ENCODE measurements at regions of chr13 and their contacts with region 1.

Region 1: GRCh38 chr13:98576963-98577822 is at the start of gene STK24:
- DNase-seq: peak; percentile 69 to 81
- ATAC-seq: peak; percentile 71 to 86 (median 78)
- H3K4me3 ChIP-seq: peak within 1 kb of the TSS; percentile 73 to 99 (median 94)
- H3K27ac ChIP-seq: peak within 1 kb of the TSS; percentile 96 to 99 (median 98)
- H3K4me1 ChIP-seq: peaks cover 7 to 74% (median 39%) of the 10 kb centered on the region in 9 donors
- H3K27me3 ChIP-seq: no peaks in the 10 kb centered on the region
- CTCF ChIP-seq: no peak
- total RNA-seq, gene STK24: 52.0 to 72.9 (median 63.2) TPM

Region 2: DNA sequence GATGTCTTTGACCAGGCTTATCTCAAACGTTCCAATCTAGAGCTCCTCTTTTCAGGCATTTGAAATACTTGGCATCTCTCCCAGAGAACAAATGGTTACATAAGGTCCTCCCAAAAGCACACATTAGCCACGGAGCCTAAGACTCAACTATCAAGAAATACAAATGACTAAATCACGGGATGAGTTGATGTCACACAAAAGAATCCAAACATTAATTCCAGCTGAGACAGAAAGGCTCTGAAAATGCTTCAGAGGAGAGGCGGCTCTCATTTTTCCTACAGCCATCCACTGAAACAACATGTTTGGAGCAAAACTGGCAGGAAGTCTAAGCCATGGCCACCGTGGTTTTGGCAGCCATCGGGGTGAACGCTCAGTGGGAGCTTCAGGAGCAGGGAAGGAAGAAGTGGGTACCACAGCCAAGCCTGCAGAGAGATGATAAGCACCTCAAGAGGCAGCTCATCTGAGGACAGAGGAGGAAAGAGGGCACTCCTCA is 122.8 kb before region 1 on chr13:
- intact Hi-C with region 1: loop called in 7 of 10 experiments (anchors 5 to 10 kb)
- DNase-seq: no peak
- ATAC-seq: peak in 7 of 8 donors; percentile 45 to 83 (median 68)
- H3K4me3 ChIP-seq: no peak overlapping the region
- H3K27ac ChIP-seq: peak overlapping the region in 9 of 10 donors; percentile 7 to 86 (median 66)
- H3K4me1 ChIP-seq: peaks cover 11 to 71% (median 50%) of the 10 kb centered on the region in 9 donors
- H3K27me3 ChIP-seq: no peaks in the 10 kb centered on the region
- CTCF ChIP-seq: no peak

Region 3: GRCh38 chr13:98476538-98476966 is 100.6 kb before region 1 on chr13:
- intact Hi-C with region 1: loop called in 5 of 10 experiments (anchors 5 to 10 kb)
- DNase-seq: no peak
- ATAC-seq: peak; percentile 11 to 65 (median 42)
- H3K4me3 ChIP-seq: peak overlapping the region in 1 of 10 donors; percentile 3
- H3K27ac ChIP-seq: peak overlapping the region in 7 of 10 donors; percentile 7 to 82 (median 37)
- H3K4me1 ChIP-seq: peaks cover 8 to 93% (median 63%) of the 10 kb centered on the region in 9 donors
- H3K27me3 ChIP-seq: no peaks in the 10 kb centered on the region
- CTCF ChIP-seq: no peak

Region 4: DNA sequence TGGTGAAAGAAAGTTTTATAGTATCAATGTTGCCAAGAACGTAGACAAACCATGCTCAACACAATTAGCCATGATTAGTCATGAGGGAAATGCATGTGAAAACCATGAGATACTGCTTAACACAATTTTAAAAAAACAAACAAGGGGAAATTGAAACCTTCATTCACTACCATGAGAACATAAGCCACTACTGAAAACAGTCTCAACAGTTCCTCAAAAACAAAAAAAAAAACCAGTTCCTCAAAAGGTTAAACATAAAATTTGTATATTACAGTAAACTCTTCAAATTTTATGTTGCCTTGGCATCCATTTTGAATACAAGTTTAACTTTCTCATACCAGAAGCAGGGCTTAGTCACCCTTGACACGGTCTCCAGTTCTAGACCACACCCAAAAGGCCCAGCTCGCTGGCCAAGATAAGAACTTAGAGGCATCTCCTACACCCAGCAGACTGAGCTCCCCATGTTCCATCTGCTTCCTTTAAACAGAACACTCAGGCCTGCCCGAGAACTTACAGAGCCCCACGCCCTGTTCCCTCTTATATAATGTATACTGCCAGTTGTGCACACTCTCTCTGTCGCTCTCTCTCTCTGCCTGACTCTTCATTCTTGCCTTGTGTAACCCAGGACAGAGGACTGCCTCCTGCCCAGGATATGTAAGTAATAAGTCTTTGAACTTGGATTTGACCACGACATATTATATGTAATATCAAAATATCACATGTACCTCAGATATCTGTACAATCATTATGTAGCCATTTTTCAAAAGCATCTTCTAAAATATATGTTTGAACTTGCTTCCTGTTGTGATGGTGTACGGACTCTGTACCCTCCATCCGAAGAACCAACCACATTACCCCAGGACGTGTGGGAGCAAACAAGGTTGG is 67.7 kb before region 1 on chr13:
- intact Hi-C with region 1: loop called in 6 of 10 experiments (anchors 2 to 10 kb)
- DNase-seq: peak in 1 of 2 donors; percentile 44
- ATAC-seq: peak in 7 of 8 donors; percentile 40 to 83 (median 73)
- H3K4me3 ChIP-seq: no peak overlapping the region
- H3K27ac ChIP-seq: peak overlapping the region in 9 of 10 donors; percentile 3 to 85 (median 46)
- H3K4me1 ChIP-seq: peaks cover 26 to 84% (median 73%) of the 10 kb centered on the region in 9 donors
- H3K27me3 ChIP-seq: no peaks in the 10 kb centered on the region
- CTCF ChIP-seq: no peak

Region 5: GRCh38 chr13:98653463-98653985 is 76.3 kb after region 1 on chr13:
- intact Hi-C with region 1: loop called in 4 of 10 experiments (anchors 5 kb)
- DNase-seq: peak; percentile 64 to 68
- ATAC-seq: peak; percentile 78 to 90 (median 87)
- H3K4me3 ChIP-seq: no peak overlapping the region
- H3K27ac ChIP-seq: no peak overlapping the region
- H3K4me1 ChIP-seq: peaks cover 0 to 19% (median 0%) of the 10 kb centered on the region in 9 donors
- H3K27me3 ChIP-seq: peaks cover 0 to 3% (median 0%) of the 10 kb centered on the region in 7 donors
- CTCF ChIP-seq: peak; percentile 86 to 93 (median 89)